ENCODE measurements at regions of chr1 and their contacts with region 1.

Region 1: DNA sequence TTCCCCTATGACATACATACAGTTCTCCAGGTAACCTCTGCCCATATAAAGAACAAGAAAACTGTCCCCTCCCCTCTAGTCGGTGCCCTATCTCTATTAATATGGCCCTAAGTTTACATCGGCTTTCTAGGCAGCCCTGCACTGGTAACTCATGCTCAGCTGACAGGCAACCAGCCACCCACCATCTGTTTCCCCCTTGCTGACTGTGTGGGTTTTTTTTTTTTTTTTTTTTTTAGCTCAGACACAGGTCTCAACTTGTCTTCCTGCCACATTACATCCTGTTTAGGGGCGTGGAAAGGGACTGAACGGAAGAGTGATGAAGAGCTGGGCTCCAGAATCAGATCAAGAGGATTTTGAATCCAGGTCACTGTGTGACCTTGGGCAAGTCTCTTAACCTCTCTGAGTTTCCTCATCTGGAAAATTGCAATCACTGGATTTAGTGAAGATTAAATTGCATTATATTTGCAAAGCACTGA is 14.0 kb downstream of the LAPTM5 start:
- DNase-seq: peak; percentile 85
- ATAC-seq: peak; percentile 71
- H3K4me3 Mint-ChIP-seq: peak overlapping the region; percentile 55
- H3K27ac Mint-ChIP-seq: peak overlapping the region; percentile 98
- H3K4me1 Mint-ChIP-seq: peaks cover 96% of the 10 kb centered on the region
- H3K27me3 Mint-ChIP-seq: no peaks in the 10 kb centered on the region
- CTCF ChIP-seq: no peak

Region 2: GRCh38 chr1:30732277-30732996 is 11.2 kb before region 1 on chr1:
- CTCF ChIA-PET with region 1: interaction called, 9 read pairs
- POLR2A ChIA-PET with region 1: interaction called, 671 read pairs
- intact Hi-C with region 1: no loop called
- DNase-seq: no peak
- ATAC-seq: peak; percentile 32
- H3K4me3 Mint-ChIP-seq: no peak overlapping the region
- H3K27ac Mint-ChIP-seq: peak overlapping the region; percentile 73
- H3K4me1 Mint-ChIP-seq: peaks cover 22% of the 10 kb centered on the region
- H3K27me3 Mint-ChIP-seq: no peaks in the 10 kb centered on the region
- CTCF ChIP-seq: no peak

Region 3: GRCh38 chr1:30756545-30757195 is 13.0 kb after region 1 on chr1:
- CTCF ChIA-PET with region 1: interaction called, 21 read pairs
- POLR2A ChIA-PET with region 1: interaction called, 671 read pairs
- intact Hi-C with region 1: loop called (anchors 1 kb)
- DNase-seq: peak; percentile 88
- ATAC-seq: peak; percentile 57
- H3K4me3 Mint-ChIP-seq: peak overlapping the region; percentile 87
- H3K27ac Mint-ChIP-seq: peak overlapping the region; percentile 98
- H3K4me1 Mint-ChIP-seq: peaks cover 75% of the 10 kb centered on the region
- H3K27me3 Mint-ChIP-seq: no peaks in the 10 kb centered on the region
- CTCF ChIP-seq: no peak

Region 4: DNA sequence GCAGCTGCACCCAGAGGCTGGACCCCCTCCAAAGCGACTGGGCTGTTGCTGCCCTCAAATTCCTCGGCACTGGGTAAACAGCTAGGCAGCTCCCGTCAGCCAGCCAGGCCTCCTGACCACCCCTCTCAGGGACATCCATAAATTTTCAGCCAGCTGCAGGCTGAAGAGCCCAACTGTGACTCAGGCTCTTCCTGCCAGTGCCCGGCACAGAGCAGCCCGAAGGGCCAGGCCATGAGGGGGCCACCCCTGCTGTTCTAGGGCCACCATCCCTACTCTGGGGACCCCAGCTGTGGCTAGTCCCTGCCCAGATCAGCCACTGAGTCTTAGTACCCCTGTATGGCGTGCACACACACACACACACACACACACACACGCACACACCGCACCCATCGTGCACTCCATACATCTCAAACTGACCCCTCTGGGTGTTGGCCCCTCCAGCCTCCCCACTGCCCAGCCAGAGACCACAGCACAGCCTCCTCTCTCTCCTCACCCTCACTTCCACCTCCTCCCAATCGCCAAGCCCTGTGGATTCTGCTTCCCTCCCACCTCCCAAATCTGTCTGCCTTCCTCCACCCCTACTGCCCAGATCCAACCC is 20.1 kb after region 1 on chr1:
- CTCF ChIA-PET with region 1: interaction called, 21 read pairs
- POLR2A ChIA-PET with region 1: interaction called, 671 read pairs
- intact Hi-C with region 1: loop called (anchors 1 kb)
- DNase-seq: no peak
- ATAC-seq: no peak
- H3K4me3 Mint-ChIP-seq: no peak overlapping the region
- H3K27ac Mint-ChIP-seq: peak overlapping the region; percentile 81
- H3K4me1 Mint-ChIP-seq: peaks cover 90% of the 10 kb centered on the region
- H3K27me3 Mint-ChIP-seq: no peaks in the 10 kb centered on the region
- CTCF ChIP-seq: no peak

Measured in activated CD8-positive, alpha-beta T cell treated with anti-CD3 and anti-CD28 coated beads for 36 hours (primary cell).